ENCODE measurements at regions of chr10 and their contacts with region 1.

Region 1: DNA sequence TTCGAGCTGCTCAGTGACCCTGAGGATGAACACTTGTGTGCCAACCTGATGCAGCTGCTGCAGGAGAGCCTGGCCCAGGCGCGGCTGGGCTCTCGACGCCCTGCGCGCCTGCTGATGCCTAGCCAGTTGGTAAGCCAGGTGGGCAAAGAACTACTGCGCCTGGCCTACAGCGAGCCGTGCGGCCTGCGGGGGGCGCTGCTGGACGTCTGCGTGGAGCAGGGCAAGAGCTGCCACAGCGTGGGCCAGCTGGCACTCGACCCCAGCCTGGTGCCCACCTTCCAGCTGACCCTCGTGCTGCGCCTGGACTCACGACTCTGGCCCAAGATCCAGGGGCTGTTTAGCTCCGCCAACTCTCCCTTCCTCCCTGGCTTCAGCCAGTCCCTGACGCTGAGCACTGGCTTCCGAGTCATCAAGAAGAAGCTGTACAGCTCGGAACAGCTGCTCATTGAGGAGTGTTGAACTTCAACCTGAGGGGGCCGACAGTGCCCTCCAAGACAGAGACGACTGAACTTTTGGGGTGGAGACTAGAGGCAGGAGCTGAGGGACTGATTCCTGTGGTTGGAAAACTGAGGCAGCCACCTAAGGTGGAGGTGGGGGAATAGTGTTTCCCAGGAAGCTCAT is 1.1 kb downstream of the DDIT4 start:
- DNase-seq: peak; percentile 70

Region 2: GRCh38 chr10:72309290-72310240 is 34.7 kb after region 1 on chr10:
- in situ Hi-C with region 1: loop called (anchors 5 kb)
- DNase-seq: peak; percentile 66